Common myeloid progenitor, CD34-positive (primary cell): ENCODE measurements at regions of chr4 and their contacts with region 1.

Region 1: GRCh38 chr4:80184053-80184790 is 13.1 kb upstream of the PRDM8 start:
- DNase-seq: peak; percentile 90 to 94 (median 94)
- H3K4me3 ChIP-seq: peak overlapping the region; percentile 53 to 95 (median 91)
- H3K27ac ChIP-seq: peak overlapping the region; percentile 70 to 89
- H3K4me1 ChIP-seq: peaks cover 3 to 27% (median 22%) of the 10 kb centered on the region in 4 experiments
- H3K27me3 ChIP-seq: peaks cover 0 to 3% (median 0%) of the 10 kb centered on the region in 5 experiments

Region 2: GRCh38 chr4:79650794-79651431 is 533.3 kb before region 1 on chr4:
- CTCF ChIA-PET with region 1: no interaction called
- POLR2A ChIA-PET with region 1: no interaction called
- DNase-seq: no peak
- H3K4me3 ChIP-seq: no peak overlapping the region
- H3K27ac ChIP-seq: no peak overlapping the region
- H3K4me1 ChIP-seq: no peaks in the 10 kb centered on the region
- H3K27me3 ChIP-seq: no peaks in the 10 kb centered on the region

Region 3: DNA sequence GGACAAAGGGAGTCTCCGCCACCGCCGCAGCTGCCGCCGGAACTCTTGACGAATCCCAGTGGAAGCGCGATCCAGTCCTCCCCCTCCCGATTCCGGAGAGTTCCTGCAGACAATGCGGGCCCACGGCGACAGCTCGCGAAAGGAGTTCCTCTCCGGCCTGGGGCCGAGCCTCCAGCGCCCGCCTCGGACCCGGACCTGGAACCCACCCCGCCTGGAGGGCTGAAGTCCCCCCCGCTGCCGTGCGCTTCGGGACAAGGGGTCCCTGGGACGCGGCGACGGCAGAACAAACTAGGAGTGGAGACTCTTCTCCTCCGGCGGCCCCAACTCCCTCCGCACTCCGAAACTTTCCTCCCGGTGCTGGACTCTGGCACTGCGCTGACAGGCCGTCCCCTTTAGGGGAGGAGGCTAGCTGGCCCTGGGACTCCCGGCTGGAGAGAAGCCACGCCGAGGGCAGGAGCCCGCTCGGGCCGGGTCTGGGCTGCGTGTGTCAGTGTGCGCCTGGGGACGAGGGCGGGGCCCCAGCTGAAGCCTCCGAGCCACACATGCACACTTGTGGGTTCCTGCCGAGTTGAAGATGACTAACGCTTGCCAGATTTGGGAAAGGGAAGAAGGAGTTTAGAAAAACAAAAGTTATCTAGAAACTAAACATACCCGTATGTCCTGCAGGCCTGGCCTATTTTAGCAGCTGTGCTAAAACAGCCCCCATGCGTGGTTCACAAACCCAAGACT is 111.3 kb before region 1 on chr4 and contains the start of gene ANTXR2:
- CTCF ChIA-PET with region 1: interaction called, 15 read pairs
- POLR2A ChIA-PET with region 1: interaction called, 5 read pairs
- DNase-seq: peak; percentile 90 to 98 (median 96)
- H3K4me3 ChIP-seq: peak within 1 kb of the TSS; percentile 87 to 98 (median 95)
- H3K27ac ChIP-seq: peak within 1 kb of the TSS; percentile 92 to 95
- H3K4me1 ChIP-seq: peaks cover 42 to 75% (median 53%) of the 10 kb centered on the region in 4 experiments
- H3K27me3 ChIP-seq: no peaks in the 10 kb centered on the region

Region 4: DNA sequence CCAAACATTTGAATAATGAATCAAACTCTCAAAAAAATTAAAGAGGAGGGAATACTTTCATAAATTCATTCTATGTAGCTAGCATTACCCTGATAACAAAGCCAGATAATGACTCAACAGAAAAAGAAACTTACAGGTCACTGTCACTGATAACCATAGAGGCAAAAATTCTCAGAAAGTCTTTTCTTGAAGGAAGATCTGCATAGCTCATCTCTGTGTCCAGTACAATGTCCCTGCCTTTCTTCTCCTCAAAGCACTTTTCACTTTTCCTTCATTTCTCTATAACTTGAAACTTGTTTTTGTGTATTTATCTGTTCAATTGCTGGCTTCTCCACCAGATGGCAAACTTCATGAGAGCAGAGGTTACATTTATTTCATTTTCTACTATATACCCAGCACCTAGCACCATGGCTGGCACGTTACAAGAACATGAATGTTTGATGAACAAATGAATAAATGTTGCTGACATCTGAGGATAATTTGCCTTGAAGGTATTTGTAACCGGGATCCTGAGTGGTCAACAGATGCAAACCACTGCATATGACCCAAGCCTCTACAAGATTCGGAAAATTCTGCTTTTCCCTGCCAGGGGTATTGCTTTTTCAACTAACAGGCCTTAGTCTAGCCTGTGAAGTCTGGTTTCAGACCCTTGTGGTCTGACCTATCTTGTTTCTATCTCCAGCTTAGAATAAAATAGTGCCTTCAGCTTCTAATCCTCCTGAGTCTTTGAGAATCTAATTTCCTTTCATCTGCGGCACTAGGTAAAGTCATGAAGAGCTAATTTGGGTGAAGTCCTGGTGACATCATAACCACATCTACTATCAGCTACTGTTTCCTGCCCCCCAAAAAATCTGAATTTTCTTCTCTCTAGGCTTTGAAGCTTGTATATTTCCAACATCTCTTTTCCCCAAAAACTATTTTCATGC is 58.7 kb before region 1 on chr4:
- CTCF ChIA-PET with region 1: interaction called, 91 read pairs
- POLR2A ChIA-PET with region 1: interaction called, 12 read pairs
- DNase-seq: peak; percentile 64 to 83 (median 82)
- H3K4me3 ChIP-seq: peak overlapping the region in 1 of 7 experiments; percentile 29
- H3K27ac ChIP-seq: peak overlapping the region; percentile 81 to 92
- H3K4me1 ChIP-seq: peaks cover 6 to 36% (median 28%) of the 10 kb centered on the region in 4 experiments
- H3K27me3 ChIP-seq: no peaks in the 10 kb centered on the region

Region 5: GRCh38 chr4:80173401-80173800 is 10.8 kb before region 1 on chr4:
- CTCF ChIA-PET with region 1: interaction called, 11 read pairs
- POLR2A ChIA-PET with region 1: no interaction called
- DNase-seq: peak; percentile 27 to 86 (median 82)
- H3K4me3 ChIP-seq: no peak overlapping the region
- H3K27ac ChIP-seq: peak overlapping the region in 1 of 2 experiments; percentile 35
- H3K4me1 ChIP-seq: peaks cover 11 to 16% (median 14%) of the 10 kb centered on the region in 4 experiments
- H3K27me3 ChIP-seq: no peaks in the 10 kb centered on the region

Region 6: GRCh38 chr4:80202190-80202711 is 18.0 kb after region 1 on chr4:
- CTCF ChIA-PET with region 1: interaction called, 101 read pairs
- POLR2A ChIA-PET with region 1: interaction called, 6 read pairs
- DNase-seq: peak; percentile 75 to 86 (median 78)
- H3K4me3 ChIP-seq: peak overlapping the region; percentile 53 to 80 (median 75)
- H3K27ac ChIP-seq: peak overlapping the region; percentile 33 to 64
- H3K4me1 ChIP-seq: peaks cover 2 to 33% (median 23%) of the 10 kb centered on the region in 4 experiments
- H3K27me3 ChIP-seq: peaks cover 0 to 19% (median 2%) of the 10 kb centered on the region in 5 experiments

Region 7: GRCh38 chr4:80215449-80216052 is 31.3 kb after region 1 on chr4:
- CTCF ChIA-PET with region 1: interaction called, 24 read pairs
- POLR2A ChIA-PET with region 1: no interaction called
- DNase-seq: peak in 2 of 3 donors; percentile 50 to 61
- H3K4me3 ChIP-seq: no peak overlapping the region
- H3K27ac ChIP-seq: no peak overlapping the region
- H3K4me1 ChIP-seq: no peaks in the 10 kb centered on the region
- H3K27me3 ChIP-seq: peaks cover 0 to 3% (median 0%) of the 10 kb centered on the region in 5 experiments

Region 8: GRCh38 chr4:80434238-80434637 is 250.0 kb after region 1 on chr4:
- CTCF ChIA-PET with region 1: no interaction called
- POLR2A ChIA-PET with region 1: no interaction called
- DNase-seq: peak in 2 of 3 donors; percentile 2 to 3
- H3K4me3 ChIP-seq: no peak overlapping the region
- H3K27ac ChIP-seq: no peak overlapping the region
- H3K4me1 ChIP-seq: no peaks in the 10 kb centered on the region
- H3K27me3 ChIP-seq: peaks cover 0 to 3% (median 0%) of the 10 kb centered on the region in 5 experiments